Endothelial cell of umbilical vein (primary cell): ENCODE measurements at regions of chr11 and their contacts with region 1.

Region 1: GRCh38 chr11:57644748-57645688 is 4.7 kb downstream of the YPEL4 start:
- DNase-seq: peak; percentile 68
- H3K4me3 ChIP-seq: no peak overlapping the region
- H3K27ac ChIP-seq: no peak overlapping the region
- H3K4me1 ChIP-seq: peaks cover 14% of the 10 kb centered on the region
- H3K27me3 ChIP-seq: peaks cover 38 to 44% of the 10 kb centered on the region in 2 experiments
- CTCF ChIP-seq: peak; percentile 78 to 86
- POLR2A ChIP-seq: no peak

Region 2: DNA sequence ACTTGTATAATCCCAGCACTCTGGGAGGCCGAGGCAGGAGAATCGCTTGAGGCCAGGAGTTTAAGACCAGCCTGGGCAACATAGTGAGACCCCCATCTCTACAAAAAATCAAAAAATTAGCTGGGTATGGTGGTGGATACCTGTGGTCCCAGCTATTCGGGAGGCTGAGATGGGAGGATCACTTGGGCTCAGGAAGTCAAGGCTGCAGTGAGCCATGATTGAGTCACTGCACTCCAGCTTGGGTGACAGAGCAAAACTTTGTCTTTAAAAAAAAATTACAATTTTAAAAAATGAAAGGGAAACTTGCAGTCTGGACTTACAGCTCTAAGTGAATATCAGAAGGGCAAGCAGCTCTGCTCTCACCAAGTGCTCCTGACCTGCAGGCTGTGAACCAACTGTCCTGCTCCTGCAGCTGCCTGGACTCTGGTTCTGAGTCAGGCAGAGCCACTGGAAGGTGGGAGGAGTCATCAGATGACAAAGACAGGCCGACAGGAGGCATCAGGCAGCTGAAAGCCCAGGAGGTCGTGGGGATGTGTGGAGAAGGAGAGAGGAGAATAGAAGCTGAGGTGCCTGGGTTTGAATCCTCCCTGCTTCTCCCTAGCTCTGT is 98.0 kb before region 1 on chr11:
- CTCF ChIA-PET with region 1: interaction called, 13 read pairs
- POLR2A ChIA-PET with region 1: no interaction called
- dilution Hi-C with region 1: no loop called
- intact Hi-C with region 1: no loop called
- DNase-seq: peak; percentile 12
- H3K4me3 ChIP-seq: no peak overlapping the region
- H3K27ac ChIP-seq: no peak overlapping the region
- H3K4me1 ChIP-seq: no peaks in the 10 kb centered on the region
- H3K27me3 ChIP-seq: peaks cover 0 to 2% of the 10 kb centered on the region in 2 experiments
- CTCF ChIP-seq: no peak
- POLR2A ChIP-seq: no peak

Region 3: GRCh38 chr11:57657194-57658022 is 12.4 kb after region 1 on chr11 and contains the start of gene CLP1:
- CTCF ChIA-PET with region 1: interaction called, 26 read pairs
- POLR2A ChIA-PET with region 1: no interaction called
- dilution Hi-C with region 1: no loop called
- intact Hi-C with region 1: no loop called
- DNase-seq: peak; percentile 99
- H3K4me3 ChIP-seq: peak within 1 kb of the TSS; percentile 59 to 98 (median 90)
- H3K27ac ChIP-seq: peak within 1 kb of the TSS; percentile 75
- H3K4me1 ChIP-seq: peaks cover 4% of the 10 kb centered on the region
- H3K27me3 ChIP-seq: no peaks in the 10 kb centered on the region
- CTCF ChIP-seq: no peak
- POLR2A ChIP-seq: peak; percentile 70
- total RNA-seq, gene CLP1: 17.9 and 20.9 TPM in 2 replicates

Region 4: DNA sequence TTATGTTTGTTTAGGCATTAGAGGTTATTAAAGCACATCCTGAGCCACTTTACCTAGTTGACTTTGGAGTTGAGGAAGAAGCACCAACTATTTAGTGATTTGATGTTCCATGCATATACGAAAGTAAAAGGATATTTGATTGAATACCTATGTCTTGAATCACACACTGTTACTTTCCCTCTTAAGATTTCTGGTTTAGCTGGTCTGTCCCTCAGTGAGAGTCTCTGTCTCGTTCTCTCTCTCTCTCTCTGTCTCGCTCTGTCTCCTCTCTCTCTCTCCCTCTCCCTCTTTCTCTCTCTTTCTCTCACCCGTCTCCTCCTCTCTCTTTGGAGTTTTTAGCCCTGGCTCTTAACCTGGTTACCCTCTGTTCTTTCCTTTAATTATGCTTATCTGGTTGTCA is 127.5 kb after region 1 on chr11:
- CTCF ChIA-PET with region 1: no interaction called
- POLR2A ChIA-PET with region 1: no interaction called
- dilution Hi-C with region 1: no loop called
- intact Hi-C with region 1: no loop called
- DNase-seq: no peak
- H3K4me3 ChIP-seq: no peak overlapping the region
- H3K27ac ChIP-seq: peak overlapping the region; percentile 18
- H3K4me1 ChIP-seq: peaks cover 62% of the 10 kb centered on the region
- H3K27me3 ChIP-seq: no peaks in the 10 kb centered on the region
- CTCF ChIP-seq: no peak
- POLR2A ChIP-seq: no peak